ENCODE measurements at regions of chr1 and their contacts with region 1.

Region 1: GRCh38 chr1:74771913-74772515 is 39.1 kb downstream of the TYW3 start:
- DNase-seq: peak; percentile 8
- ATAC-seq: peak; percentile 80
- H3K4me3 ChIP-seq: no peak overlapping the region
- H3K27ac ChIP-seq: no peak overlapping the region
- H3K4me1 ChIP-seq: no peaks in the 10 kb centered on the region
- H3K27me3 ChIP-seq: no peaks in the 10 kb centered on the region; a peak in 1 of 4 replicates
- CTCF ChIP-seq: peak; percentile 60 to 74 (median 63)
- EP300 ChIP-seq: no peak
- POLR2A ChIP-seq: no peak
- RAD21 ChIP-seq: peak; percentile 92

Region 2: GRCh38 chr1:74748960-74749359 is 23.1 kb before region 1 on chr1:
- CTCF ChIA-PET with region 1: interaction called, 20 read pairs
- POLR2A ChIA-PET with region 1: interaction called, 4 read pairs
- RAD21 ChIA-PET with region 1: interaction called, 7 read pairs
- SMC1A ChIA-PET with region 1: interaction called, 6 read pairs
- in situ Hi-C with region 1: no loop called
- intact Hi-C with region 1: no loop called
- DNase-seq: no peak
- ATAC-seq: peak; percentile 96
- H3K4me3 ChIP-seq: no peak overlapping the region
- H3K27ac ChIP-seq: no peak overlapping the region
- H3K4me1 ChIP-seq: no peaks in the 10 kb centered on the region
- H3K27me3 ChIP-seq: no peaks in the 10 kb centered on the region
- CTCF ChIP-seq: no peak
- EP300 ChIP-seq: no peak; a peak in 1 of 4 replicates
- POLR2A ChIP-seq: no peak
- RAD21 ChIP-seq: no peak

Region 3: GRCh38 chr1:74937176-74937575 is 165.2 kb after region 1 on chr1:
- CTCF ChIA-PET with region 1: no interaction called
- POLR2A ChIA-PET with region 1: no interaction called
- RAD21 ChIA-PET with region 1: interaction called, 3 read pairs
- SMC1A ChIA-PET with region 1: no interaction called
- in situ Hi-C with region 1: no loop called
- intact Hi-C with region 1: loop called (anchors 10 kb)
- DNase-seq: no peak
- ATAC-seq: no peak
- H3K4me3 ChIP-seq: no peak overlapping the region
- H3K27ac ChIP-seq: no peak overlapping the region
- H3K4me1 ChIP-seq: no peaks in the 10 kb centered on the region
- H3K27me3 ChIP-seq: no peaks in the 10 kb centered on the region
- CTCF ChIP-seq: no peak
- EP300 ChIP-seq: no peak
- POLR2A ChIP-seq: no peak
- RAD21 ChIP-seq: no peak

Region 4: DNA sequence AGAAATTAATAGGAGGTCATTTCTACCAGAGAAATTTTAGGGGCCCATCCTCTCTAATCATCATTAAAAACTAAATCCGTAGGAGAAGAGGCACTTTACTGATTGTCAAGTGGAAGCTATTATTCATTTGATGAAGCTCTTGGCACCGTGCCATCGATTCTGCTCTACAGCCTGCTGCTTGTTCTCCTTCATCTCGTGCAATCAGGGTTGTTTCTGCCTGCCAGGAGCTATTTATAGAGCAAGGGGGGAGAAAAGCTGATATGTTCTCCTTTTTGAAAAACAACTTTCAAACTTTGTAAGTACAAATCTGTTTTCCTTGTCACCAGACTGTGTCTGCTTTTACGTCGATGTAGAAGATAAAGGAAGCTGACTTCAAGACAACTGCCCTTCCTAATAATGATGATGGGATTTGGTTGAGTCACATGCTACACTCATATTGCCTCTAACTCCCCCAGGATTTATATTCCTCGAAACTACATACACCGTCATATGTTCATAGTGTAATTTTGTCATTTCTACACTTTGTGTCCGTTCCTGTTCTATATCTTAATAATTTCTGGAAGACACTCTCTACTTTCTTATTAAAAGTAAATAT is 192.6 kb after region 1 on chr1:
- CTCF ChIA-PET with region 1: interaction called, 3 read pairs
- POLR2A ChIA-PET with region 1: no interaction called
- RAD21 ChIA-PET with region 1: interaction called, 3 read pairs
- SMC1A ChIA-PET with region 1: no interaction called
- in situ Hi-C with region 1: no loop called
- intact Hi-C with region 1: loop called (anchors 10 kb)
- DNase-seq: no peak
- ATAC-seq: no peak
- H3K4me3 ChIP-seq: no peak overlapping the region
- H3K27ac ChIP-seq: no peak overlapping the region
- H3K4me1 ChIP-seq: no peaks in the 10 kb centered on the region
- H3K27me3 ChIP-seq: no peaks in the 10 kb centered on the region
- CTCF ChIP-seq: no peak
- EP300 ChIP-seq: no peak
- POLR2A ChIP-seq: no peak
- RAD21 ChIP-seq: no peak

Region 5: DNA sequence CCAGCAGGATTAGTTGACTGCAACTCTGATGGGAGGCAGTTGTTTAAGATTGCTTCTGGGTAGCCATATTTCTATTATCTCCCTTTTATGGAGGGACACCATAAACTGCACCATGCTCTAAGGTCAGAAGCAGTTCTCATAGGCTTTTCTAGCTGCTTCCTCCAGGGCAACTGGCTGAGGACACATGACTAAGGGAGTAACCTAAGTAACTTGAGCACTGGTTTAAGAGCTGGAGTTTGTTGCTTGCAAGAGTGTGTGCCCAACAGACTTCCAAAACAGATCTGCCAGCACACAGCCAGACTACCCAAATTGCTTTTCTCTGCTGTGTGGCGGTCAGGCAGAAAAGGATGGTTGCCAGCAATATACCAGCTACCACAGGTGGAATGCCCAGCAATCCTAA is 251.0 kb after region 1 on chr1:
- CTCF ChIA-PET with region 1: interaction called, 3 read pairs
- POLR2A ChIA-PET with region 1: no interaction called
- RAD21 ChIA-PET with region 1: no interaction called
- SMC1A ChIA-PET with region 1: interaction called, 3 read pairs
- in situ Hi-C with region 1: no loop called
- intact Hi-C with region 1: loop called (anchors 10 kb)
- DNase-seq: no peak
- ATAC-seq: no peak
- H3K4me3 ChIP-seq: no peak overlapping the region
- H3K27ac ChIP-seq: no peak overlapping the region
- H3K4me1 ChIP-seq: no peaks in the 10 kb centered on the region
- H3K27me3 ChIP-seq: no peaks in the 10 kb centered on the region
- CTCF ChIP-seq: no peak
- EP300 ChIP-seq: no peak
- POLR2A ChIP-seq: no peak
- RAD21 ChIP-seq: no peak

Region 6: DNA sequence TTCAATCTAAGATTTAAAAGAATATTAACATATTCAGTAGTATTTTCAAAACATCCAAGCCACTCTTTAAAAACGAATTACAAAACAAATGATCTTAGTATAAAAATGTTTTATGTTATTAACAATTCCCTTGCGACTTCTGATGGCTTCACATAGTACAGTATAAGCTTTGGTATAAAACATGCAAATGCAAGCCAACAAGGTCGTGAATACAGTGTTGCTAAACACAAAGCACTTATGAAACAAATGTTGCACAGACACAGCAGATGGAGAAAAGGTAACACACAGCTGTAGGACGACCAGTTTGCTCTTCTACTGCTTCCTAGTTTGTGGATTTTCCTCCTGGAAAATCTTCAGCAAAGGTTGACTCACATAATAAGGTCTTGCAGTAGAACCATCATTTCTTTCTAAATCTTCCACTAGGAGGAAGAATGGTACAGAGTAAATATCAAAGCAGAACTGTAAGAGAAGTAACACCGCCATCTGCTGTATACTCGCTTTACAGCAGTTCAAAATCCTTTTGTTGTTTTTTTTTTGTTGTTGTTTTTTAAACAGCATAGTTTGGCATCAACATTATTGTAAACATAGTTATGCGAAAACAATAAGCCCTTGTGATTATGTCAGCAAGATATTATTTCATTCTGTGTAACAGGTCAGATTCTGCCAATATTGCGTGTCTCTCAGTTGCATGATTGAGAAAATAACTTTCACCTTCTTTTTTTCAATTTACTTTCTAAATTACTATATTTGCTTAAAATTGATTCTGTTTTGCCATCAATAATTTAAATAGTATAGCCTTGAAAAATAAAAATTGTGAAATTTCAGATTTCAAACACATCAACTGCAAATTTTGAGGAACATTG is 431.6 kb after region 1 on chr1:
- CTCF ChIA-PET with region 1: interaction called, 68 read pairs
- POLR2A ChIA-PET with region 1: no interaction called
- RAD21 ChIA-PET with region 1: interaction called, 44 read pairs
- SMC1A ChIA-PET with region 1: interaction called, 49 read pairs
- in situ Hi-C with region 1: loop called (anchors 5 kb)
- intact Hi-C with region 1: loop called (anchors 1 kb)
- DNase-seq: peak; percentile 4
- ATAC-seq: peak; percentile 83
- H3K4me3 ChIP-seq: no peak overlapping the region
- H3K27ac ChIP-seq: no peak overlapping the region
- H3K4me1 ChIP-seq: no peaks in the 10 kb centered on the region
- H3K27me3 ChIP-seq: no peaks in the 10 kb centered on the region
- CTCF ChIP-seq: peak; percentile 62 to 75 (median 74)
- EP300 ChIP-seq: no peak
- POLR2A ChIP-seq: no peak
- RAD21 ChIP-seq: peak; percentile 85

Region 7: DNA sequence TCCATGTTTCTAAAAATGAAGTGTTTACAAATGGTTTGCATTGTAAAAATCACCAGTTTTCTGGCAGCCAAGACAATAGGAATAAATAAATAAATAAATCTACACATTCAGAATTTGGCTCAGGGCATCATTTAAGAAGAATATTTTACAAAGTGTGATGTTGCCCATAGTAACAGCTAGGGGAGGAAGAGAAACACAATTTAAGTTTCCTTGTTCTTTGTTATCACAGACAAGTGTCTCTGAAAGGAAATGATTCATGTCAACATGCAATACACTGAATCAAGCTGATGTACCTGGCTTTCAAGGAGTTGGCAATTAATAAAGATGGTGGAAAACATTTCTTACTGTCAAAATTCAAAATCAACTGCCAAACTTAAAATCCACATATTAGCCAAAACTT is 436.8 kb after region 1 on chr1:
- CTCF ChIA-PET with region 1: interaction called, 68 read pairs
- POLR2A ChIA-PET with region 1: no interaction called
- RAD21 ChIA-PET with region 1: interaction called, 44 read pairs
- SMC1A ChIA-PET with region 1: interaction called, 49 read pairs
- in situ Hi-C with region 1: loop called (anchors 5 kb)
- intact Hi-C with region 1: no loop called
- DNase-seq: no peak
- ATAC-seq: no peak
- H3K4me3 ChIP-seq: no peak overlapping the region
- H3K27ac ChIP-seq: no peak overlapping the region
- H3K4me1 ChIP-seq: no peaks in the 10 kb centered on the region
- H3K27me3 ChIP-seq: no peaks in the 10 kb centered on the region
- CTCF ChIP-seq: no peak
- EP300 ChIP-seq: no peak
- POLR2A ChIP-seq: no peak
- RAD21 ChIP-seq: no peak

Measured in GM12878 (cell line).